ENCODE measurements at regions of chr1 and their contacts with region 1.

Region 1: DNA sequence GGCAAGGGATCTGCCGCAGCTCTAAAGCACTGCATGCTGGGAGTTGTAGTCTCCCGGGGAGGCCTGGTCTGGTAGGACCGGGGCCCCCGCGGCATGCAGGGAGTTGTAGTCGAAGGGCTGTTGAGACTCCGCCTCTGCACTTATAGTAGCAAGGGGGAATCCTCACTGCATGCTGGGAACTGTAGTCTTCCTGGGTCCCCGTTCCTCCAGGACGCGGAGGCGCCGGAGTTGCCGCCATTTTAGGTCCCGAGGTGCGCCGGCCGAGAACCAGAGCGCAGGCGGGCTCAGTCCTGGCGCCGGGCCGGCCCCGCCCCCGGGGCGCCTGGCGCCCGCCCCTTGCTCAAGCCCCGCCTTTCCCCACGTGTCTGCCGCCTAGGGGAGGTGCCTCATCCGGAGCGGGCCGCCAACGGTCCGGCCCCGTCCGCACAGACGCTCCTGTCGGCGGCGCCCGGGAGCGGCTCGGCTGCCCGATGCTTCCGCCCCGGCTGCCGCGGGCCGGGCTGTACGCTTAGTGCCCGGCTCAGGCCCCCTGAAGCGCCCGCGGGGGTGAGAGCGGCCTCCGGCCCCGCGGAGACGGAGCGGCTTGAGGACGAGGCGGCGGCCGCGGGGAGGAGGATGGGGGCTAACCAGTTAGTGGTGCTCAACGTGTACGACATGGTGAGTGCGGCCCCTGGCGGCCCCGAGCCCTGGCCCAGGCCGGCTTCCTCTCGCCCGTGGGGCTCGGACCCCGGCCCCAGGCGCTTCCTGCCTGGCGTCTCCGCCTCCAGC is at the start of gene DESI2:
- DNase-seq: peak; percentile 99
- ATAC-seq: peak; percentile 93
- H3K4me3 ChIP-seq: peak within 1 kb of the TSS; percentile 91
- H3K27ac ChIP-seq: peak within 1 kb of the TSS; percentile 30
- H3K4me1 ChIP-seq: peaks cover 27% of the 10 kb centered on the region
- H3K27me3 ChIP-seq: no peaks in the 10 kb centered on the region
- CTCF ChIP-seq: peak; percentile 72
- total RNA-seq, gene DESI2: 58.7 and 81.8 TPM in 2 replicates

Region 2: DNA sequence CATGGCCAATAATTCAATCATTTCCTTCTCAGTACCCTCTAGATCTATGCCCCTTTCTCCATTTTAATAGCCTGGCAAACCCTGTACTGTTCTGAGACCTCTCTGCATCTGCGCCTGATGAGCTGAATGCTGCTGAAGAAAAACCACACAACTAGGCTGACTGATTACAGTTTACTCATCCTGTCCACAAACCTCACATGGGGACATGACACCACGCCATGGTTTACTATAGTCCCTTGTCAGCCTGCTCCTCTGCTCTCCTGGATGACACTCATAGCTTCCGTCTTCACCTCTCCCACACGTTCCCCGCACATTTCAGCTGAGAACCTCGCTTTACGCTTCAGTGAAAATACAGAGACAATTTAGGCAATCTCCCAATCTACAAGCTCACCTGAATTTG is 59.8 kb after region 1 on chr1:
- CTCF ChIA-PET with region 1: no interaction called
- POLR2A ChIA-PET with region 1: no interaction called
- intact Hi-C with region 1: loop called (anchors 10 kb)
- DNase-seq: no peak
- ATAC-seq: peak; percentile 58
- H3K4me3 ChIP-seq: no peak overlapping the region
- H3K27ac ChIP-seq: no peak overlapping the region
- H3K4me1 ChIP-seq: 0 out of 2 replicates have a peak, but pooled peaks cover 4% of the 10 kb centered on the region
- H3K27me3 ChIP-seq: no peaks in the 10 kb centered on the region
- CTCF ChIP-seq: no peak

Region 3: DNA sequence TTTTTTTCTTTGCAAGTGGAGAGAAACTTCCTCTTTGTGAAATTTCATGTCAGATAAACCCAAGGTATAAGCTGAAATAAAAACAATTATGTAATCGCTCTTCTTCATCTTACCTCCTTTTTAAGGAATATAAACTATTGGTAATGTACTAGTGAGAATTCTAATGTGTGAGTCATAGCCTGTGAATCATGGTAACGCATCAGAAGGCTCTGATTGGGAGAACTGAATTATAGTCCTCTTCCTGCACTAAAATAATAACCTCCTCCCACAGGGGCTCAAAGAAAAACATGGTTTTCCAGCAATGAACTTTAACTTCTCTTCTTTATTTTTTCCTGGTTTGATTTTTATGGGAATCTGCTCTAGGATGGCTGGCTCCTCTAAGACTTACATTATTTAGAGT is 125.5 kb after region 1 on chr1:
- CTCF ChIA-PET with region 1: no interaction called
- POLR2A ChIA-PET with region 1: no interaction called
- intact Hi-C with region 1: loop called (anchors 1 kb)
- DNase-seq: peak; percentile 95
- ATAC-seq: peak; percentile 100
- H3K4me3 ChIP-seq: no peak overlapping the region
- H3K27ac ChIP-seq: peak overlapping the region; percentile 3; the same call in 1 of the 2 replicates
- H3K4me1 ChIP-seq: peaks cover 11% of the 10 kb centered on the region
- H3K27me3 ChIP-seq: no peaks in the 10 kb centered on the region
- CTCF ChIP-seq: no peak

Region 4: GRCh38 chr1:244964112-244964971 is 311.5 kb after region 1 on chr1:
- CTCF ChIA-PET with region 1: no interaction called
- POLR2A ChIA-PET with region 1: no interaction called
- intact Hi-C with region 1: loop called (anchors 5 kb)
- DNase-seq: peak; percentile 90
- ATAC-seq: peak; percentile 88
- H3K4me3 ChIP-seq: peak overlapping the region; percentile 51
- H3K27ac ChIP-seq: peak overlapping the region; percentile 85
- H3K4me1 ChIP-seq: peaks cover 39% of the 10 kb centered on the region
- H3K27me3 ChIP-seq: no peaks in the 10 kb centered on the region
- CTCF ChIP-seq: no peak

Region 5: GRCh38 chr1:245337829-245338484 is 685.1 kb after region 1 on chr1:
- CTCF ChIA-PET with region 1: no interaction called
- POLR2A ChIA-PET with region 1: no interaction called
- intact Hi-C with region 1: no loop called
- DNase-seq: no peak
- ATAC-seq: no peak
- H3K4me3 ChIP-seq: no peak overlapping the region
- H3K27ac ChIP-seq: no peak overlapping the region
- H3K4me1 ChIP-seq: no peaks in the 10 kb centered on the region
- H3K27me3 ChIP-seq: peaks cover 43% of the 10 kb centered on the region
- CTCF ChIP-seq: no peak

Region 6: GRCh38 chr1:245396615-245397014 is 743.7 kb after region 1 on chr1:
- CTCF ChIA-PET with region 1: no interaction called
- POLR2A ChIA-PET with region 1: no interaction called
- intact Hi-C with region 1: no loop called
- DNase-seq: no peak
- ATAC-seq: no peak
- H3K4me3 ChIP-seq: no peak overlapping the region
- H3K27ac ChIP-seq: no peak overlapping the region
- H3K4me1 ChIP-seq: no peaks in the 10 kb centered on the region
- H3K27me3 ChIP-seq: peaks cover 88% of the 10 kb centered on the region
- CTCF ChIP-seq: no peak